ENCODE measurements at regions of chr10 and their contacts with region 1.

Region 1: GRCh38 chr10:101012525-101013364 is 13.1 kb downstream of the LZTS2 start:
- DNase-seq: peak; percentile 95
- ATAC-seq: peak; percentile 81
- H3K4me3 ChIP-seq: no peak overlapping the region; the same call in 1 of the 2 replicates
- H3K27ac ChIP-seq: peak overlapping the region; percentile 22
- H3K4me1 ChIP-seq: peaks cover 33% of the 10 kb centered on the region
- H3K27me3 ChIP-seq: no peaks in the 10 kb centered on the region
- CTCF ChIP-seq: peak; percentile 90
- POLR2A ChIP-seq: no peak
- RAD21 ChIP-seq: peak; percentile 70

Region 2: GRCh38 chr10:100562008-100562711 is 450.6 kb before region 1 on chr10:
- CTCF ChIA-PET with region 1: interaction called, 3 read pairs
- POLR2A ChIA-PET with region 1: no interaction called
- dilution Hi-C with region 1: no loop called
- in situ Hi-C with region 1: no loop called
- intact Hi-C with region 1: loop called (anchors 10 kb)
- DNase-seq: peak; percentile 55
- ATAC-seq: peak; percentile 82
- H3K4me3 ChIP-seq: no peak overlapping the region
- H3K27ac ChIP-seq: no peak overlapping the region
- H3K4me1 ChIP-seq: peaks cover 2% of the 10 kb centered on the region
- H3K27me3 ChIP-seq: peaks cover 36% of the 10 kb centered on the region
- CTCF ChIP-seq: peak; percentile 94
- POLR2A ChIP-seq: no peak; the same call in 1 of the 2 replicates
- RAD21 ChIP-seq: peak; percentile 88

Region 3: DNA sequence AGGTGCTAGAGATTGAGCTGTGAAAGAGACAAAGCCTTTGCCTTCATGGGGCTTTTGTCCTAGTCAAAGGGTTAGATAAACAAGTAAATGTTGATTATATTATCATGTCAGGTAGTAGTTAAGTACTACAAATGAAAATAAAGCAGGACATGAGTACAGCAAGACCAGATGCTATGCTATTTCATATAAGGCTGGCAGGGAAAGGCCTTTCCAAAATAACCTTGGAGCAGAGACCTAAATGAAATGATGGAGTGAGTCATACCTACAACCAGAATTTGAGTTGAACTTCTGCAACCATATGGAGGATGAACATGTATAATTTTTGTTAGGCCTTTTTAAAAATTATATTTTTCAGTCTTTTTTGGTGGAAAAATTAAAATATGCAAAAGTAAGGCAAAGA is 67.0 kb before region 1 on chr10:
- CTCF ChIA-PET with region 1: no interaction called
- POLR2A ChIA-PET with region 1: no interaction called
- dilution Hi-C with region 1: no loop called
- in situ Hi-C with region 1: no loop called
- intact Hi-C with region 1: no loop called
- DNase-seq: no peak
- ATAC-seq: no peak
- H3K4me3 ChIP-seq: no peak overlapping the region
- H3K27ac ChIP-seq: no peak overlapping the region
- H3K4me1 ChIP-seq: peaks cover 2% of the 10 kb centered on the region; the same call in 1 of the 2 replicates
- H3K27me3 ChIP-seq: no peaks in the 10 kb centered on the region
- CTCF ChIP-seq: no peak
- POLR2A ChIP-seq: no peak
- RAD21 ChIP-seq: no peak

Region 4: DNA sequence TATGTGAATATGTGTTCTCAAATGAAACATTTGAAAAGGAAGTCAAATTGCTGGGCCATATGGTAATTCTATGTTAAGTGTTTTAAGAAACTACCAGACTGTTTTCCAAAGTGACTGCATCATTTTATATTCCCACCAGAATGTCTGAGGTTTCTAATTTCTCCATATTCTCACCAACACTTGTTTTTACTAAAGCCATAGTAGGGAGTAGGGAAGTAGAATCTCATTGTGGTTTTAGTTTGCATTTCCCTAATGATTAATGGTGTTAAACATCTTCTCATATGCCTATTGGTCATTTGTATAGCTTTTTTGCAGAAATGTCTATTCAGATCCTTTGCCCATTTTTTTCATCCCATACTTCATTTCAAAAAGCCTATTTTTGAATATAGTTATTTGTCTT is 52.5 kb before region 1 on chr10:
- CTCF ChIA-PET with region 1: no interaction called
- POLR2A ChIA-PET with region 1: no interaction called
- dilution Hi-C with region 1: no loop called
- in situ Hi-C with region 1: no loop called
- intact Hi-C with region 1: no loop called
- DNase-seq: no peak
- ATAC-seq: no peak
- H3K4me3 ChIP-seq: no peak overlapping the region
- H3K27ac ChIP-seq: no peak overlapping the region
- H3K4me1 ChIP-seq: no peaks in the 10 kb centered on the region
- H3K27me3 ChIP-seq: no peaks in the 10 kb centered on the region
- CTCF ChIP-seq: no peak
- POLR2A ChIP-seq: no peak
- RAD21 ChIP-seq: no peak

Region 5: DNA sequence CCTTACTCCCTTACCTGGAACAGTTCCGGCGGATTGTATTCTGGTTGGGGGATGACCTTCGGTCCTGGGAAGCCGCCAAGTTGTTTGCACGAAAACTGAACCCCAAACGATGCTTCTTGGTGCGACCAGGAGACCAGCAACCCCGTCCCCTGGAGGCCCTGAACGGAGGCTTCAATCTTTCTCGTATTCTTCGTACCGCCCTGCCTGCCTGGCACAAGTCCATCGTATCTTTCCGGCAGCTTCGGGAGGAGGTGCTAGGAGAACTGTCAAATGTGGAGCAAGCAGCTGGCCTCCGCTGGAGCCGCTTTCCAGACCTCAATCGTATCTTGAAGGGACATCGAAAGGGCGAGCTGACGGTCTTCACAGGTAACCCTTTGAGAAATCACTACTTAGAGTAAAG is 23.7 kb before region 1 on chr10:
- CTCF ChIA-PET with region 1: interaction called, 18 read pairs
- POLR2A ChIA-PET with region 1: no interaction called
- dilution Hi-C with region 1: no loop called
- in situ Hi-C with region 1: no loop called
- intact Hi-C with region 1: loop called (anchors 1 kb)
- DNase-seq: no peak
- ATAC-seq: no peak
- H3K4me3 ChIP-seq: no peak overlapping the region
- H3K27ac ChIP-seq: no peak overlapping the region
- H3K4me1 ChIP-seq: peaks cover 8% of the 10 kb centered on the region; the same call in 1 of the 2 replicates
- H3K27me3 ChIP-seq: no peaks in the 10 kb centered on the region
- CTCF ChIP-seq: no peak
- POLR2A ChIP-seq: no peak
- RAD21 ChIP-seq: no peak

Region 6: DNA sequence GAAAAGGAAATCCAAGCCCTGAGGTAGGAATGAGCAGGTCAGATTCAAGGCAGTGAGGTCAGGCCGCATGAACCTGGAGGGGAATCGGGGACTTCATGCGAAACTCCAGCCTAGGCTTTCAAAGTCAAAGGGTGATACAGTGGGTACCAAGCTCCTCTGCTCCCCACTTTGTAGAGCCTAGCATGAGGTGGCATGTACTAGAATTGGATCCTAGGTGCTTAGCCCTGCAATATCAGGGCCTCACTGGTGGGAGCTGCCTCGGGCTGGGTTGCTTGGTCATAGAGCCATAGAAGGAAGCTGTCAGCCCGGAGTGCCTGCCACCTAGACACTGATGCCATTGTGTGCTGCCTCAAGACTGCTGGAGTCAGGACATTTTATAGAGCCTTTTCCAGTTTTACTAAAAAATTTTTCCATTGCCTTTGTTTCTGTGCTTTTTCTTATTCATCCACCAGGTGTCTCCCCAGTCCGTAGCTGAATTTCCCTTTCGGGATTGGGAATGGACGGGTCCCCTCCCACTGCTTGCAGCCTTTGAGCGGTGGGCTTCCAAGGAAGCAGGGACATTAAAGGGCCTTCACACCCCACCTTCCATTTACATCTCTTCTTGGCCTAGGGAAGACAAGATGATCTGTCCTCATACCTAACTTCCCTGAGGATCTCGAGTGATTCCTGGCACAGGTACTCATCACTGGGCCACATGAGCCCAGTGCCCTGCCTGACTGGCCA is 18.6 kb before region 1 on chr10:
- CTCF ChIA-PET with region 1: interaction called, 48 read pairs
- POLR2A ChIA-PET with region 1: interaction called, 5 read pairs
- dilution Hi-C with region 1: no loop called
- in situ Hi-C with region 1: no loop called
- intact Hi-C with region 1: loop called (anchors 1 kb)
- DNase-seq: peak; percentile 45
- ATAC-seq: no peak
- H3K4me3 ChIP-seq: no peak overlapping the region
- H3K27ac ChIP-seq: no peak overlapping the region
- H3K4me1 ChIP-seq: peaks cover 11% of the 10 kb centered on the region
- H3K27me3 ChIP-seq: no peaks in the 10 kb centered on the region
- CTCF ChIP-seq: peak; percentile 89
- POLR2A ChIP-seq: no peak
- RAD21 ChIP-seq: peak; percentile 77

Region 7: GRCh38 chr10:100998991-100999741 is 13.6 kb before region 1 on chr10:
- CTCF ChIA-PET with region 1: interaction called, 48 read pairs
- POLR2A ChIA-PET with region 1: interaction called, 5 read pairs
- dilution Hi-C with region 1: no loop called
- in situ Hi-C with region 1: no loop called
- intact Hi-C with region 1: loop called (anchors 1 kb)
- DNase-seq: peak; percentile 75
- ATAC-seq: peak; percentile 57
- H3K4me3 ChIP-seq: peak overlapping the region; percentile 78
- H3K27ac ChIP-seq: peak overlapping the region; percentile 95
- H3K4me1 ChIP-seq: peaks cover 25% of the 10 kb centered on the region
- H3K27me3 ChIP-seq: no peaks in the 10 kb centered on the region
- CTCF ChIP-seq: peak; percentile 85
- POLR2A ChIP-seq: peak; percentile 87
- RAD21 ChIP-seq: peak; percentile 57

Region 8: DNA sequence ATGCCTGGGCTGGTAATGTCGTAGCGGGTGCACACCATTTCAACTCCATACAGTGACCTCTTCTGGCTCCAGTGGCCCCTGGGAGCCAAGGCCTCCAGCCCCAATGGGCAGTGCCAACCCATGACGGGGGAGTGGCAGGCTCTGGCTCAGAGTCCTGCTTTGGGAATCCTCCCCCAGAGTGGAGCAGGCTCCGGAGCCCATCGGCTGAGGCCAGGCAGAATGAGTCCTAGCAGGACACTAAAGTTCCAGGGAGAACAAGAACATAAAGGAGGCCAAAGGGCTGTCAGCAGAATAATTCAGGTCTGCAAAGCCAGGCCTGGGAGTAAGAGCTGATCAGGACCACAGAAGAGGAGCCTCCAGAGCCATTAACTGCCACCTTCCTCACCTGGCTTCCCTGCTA is 183.2 kb after region 1 on chr10:
- CTCF ChIA-PET with region 1: no interaction called
- POLR2A ChIA-PET with region 1: no interaction called
- dilution Hi-C with region 1: no loop called
- in situ Hi-C with region 1: no loop called
- intact Hi-C with region 1: no loop called
- DNase-seq: no peak
- ATAC-seq: no peak
- H3K4me3 ChIP-seq: no peak overlapping the region
- H3K27ac ChIP-seq: no peak overlapping the region
- H3K4me1 ChIP-seq: no peaks in the 10 kb centered on the region
- H3K27me3 ChIP-seq: peaks cover 46% of the 10 kb centered on the region
- CTCF ChIP-seq: no peak
- POLR2A ChIP-seq: no peak
- RAD21 ChIP-seq: no peak

Measured in IMR-90 (cell line).